Activated CD4-positive, alpha-beta memory T cell treated with anti-CD3 and anti-CD28 coated beads for 36 hours (primary cell): ENCODE measurements at regions of chr4 and their contacts with region 1.

Region 1: GRCh38 chr4:56655209-56655626 is 25.9 kb downstream of the HOPX start:
- DNase-seq: peak; percentile 31
- H3K4me3 Mint-ChIP-seq: peak overlapping the region; percentile 87
- H3K27ac Mint-ChIP-seq: peak overlapping the region; percentile 87
- H3K4me1 Mint-ChIP-seq: peaks cover 60% of the 10 kb centered on the region
- H3K27me3 Mint-ChIP-seq: peaks cover 38% of the 10 kb centered on the region

Region 2: GRCh38 chr4:56544573-56545131 is 110.6 kb before region 1 on chr4:
- CTCF ChIA-PET with region 1: interaction called, 6 read pairs
- POLR2A ChIA-PET with region 1: no interaction called
- intact Hi-C with region 1: loop called (anchors 10 kb)
- DNase-seq: peak; percentile 90
- H3K4me3 Mint-ChIP-seq: peak overlapping the region; percentile 42
- H3K27ac Mint-ChIP-seq: no peak overlapping the region
- H3K4me1 Mint-ChIP-seq: peaks cover 13% of the 10 kb centered on the region
- H3K27me3 Mint-ChIP-seq: peaks cover 8% of the 10 kb centered on the region

Region 3: DNA sequence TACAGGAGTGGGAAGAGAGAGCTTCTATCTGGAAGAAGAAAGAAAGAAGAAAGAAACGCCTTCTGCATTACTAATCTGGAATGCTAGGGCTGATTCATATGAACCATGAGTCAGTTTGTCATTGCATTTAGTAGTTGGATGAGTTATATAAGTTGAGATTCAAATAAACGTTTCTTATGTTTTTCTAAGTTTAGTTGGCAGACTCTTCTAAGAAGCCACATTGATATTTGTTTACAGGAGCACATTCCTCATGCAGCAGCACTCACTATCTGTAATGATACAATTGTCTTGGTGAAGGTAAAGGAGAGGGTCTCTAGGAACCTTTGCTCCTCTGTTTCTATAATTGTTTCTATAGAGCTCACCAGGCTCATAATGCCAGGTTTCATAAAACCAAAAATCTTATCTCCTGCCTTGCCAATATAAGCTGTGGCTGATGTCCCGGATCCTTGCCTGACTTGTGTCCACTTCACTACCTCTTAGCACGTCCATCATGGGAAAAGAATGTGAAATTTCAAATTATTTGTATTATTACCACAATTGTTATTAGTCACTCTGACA is 13.6 kb before region 1 on chr4:
- CTCF ChIA-PET with region 1: interaction called, 19 read pairs
- POLR2A ChIA-PET with region 1: interaction called, 64 read pairs
- intact Hi-C with region 1: loop called (anchors 1 kb)
- DNase-seq: no peak
- H3K4me3 Mint-ChIP-seq: no peak overlapping the region
- H3K27ac Mint-ChIP-seq: peak overlapping the region; percentile 80
- H3K4me1 Mint-ChIP-seq: peaks cover 32% of the 10 kb centered on the region
- H3K27me3 Mint-ChIP-seq: peaks cover 8% of the 10 kb centered on the region

Region 4: DNA sequence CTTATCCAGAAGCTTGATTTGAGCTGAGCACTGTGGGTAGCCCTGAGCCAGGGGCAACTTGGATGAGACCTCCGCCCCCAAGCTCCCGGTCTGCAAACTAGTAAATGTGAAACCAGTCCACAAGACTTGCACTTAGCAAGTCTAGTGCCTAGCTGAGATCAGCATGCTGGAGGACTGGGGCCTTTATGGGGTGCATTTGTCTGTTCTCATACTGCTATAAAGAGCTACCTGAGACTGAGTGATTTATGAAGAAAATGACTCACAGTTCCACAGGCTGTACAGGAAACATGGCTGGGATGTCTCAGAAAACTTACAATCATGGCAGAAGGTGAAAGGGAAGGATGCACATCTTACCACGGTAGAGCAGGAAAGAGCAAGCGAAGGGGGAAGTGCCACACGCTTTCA is 68.0 kb after region 1 on chr4:
- CTCF ChIA-PET with region 1: interaction called, 5 read pairs
- POLR2A ChIA-PET with region 1: interaction called, 8 read pairs
- intact Hi-C with region 1: loop called (anchors 1 kb)
- DNase-seq: peak; percentile 77
- H3K4me3 Mint-ChIP-seq: peak overlapping the region; percentile 5
- H3K27ac Mint-ChIP-seq: peak overlapping the region; percentile 80
- H3K4me1 Mint-ChIP-seq: peaks cover 23% of the 10 kb centered on the region
- H3K27me3 Mint-ChIP-seq: peaks cover 1% of the 10 kb centered on the region

Region 5: DNA sequence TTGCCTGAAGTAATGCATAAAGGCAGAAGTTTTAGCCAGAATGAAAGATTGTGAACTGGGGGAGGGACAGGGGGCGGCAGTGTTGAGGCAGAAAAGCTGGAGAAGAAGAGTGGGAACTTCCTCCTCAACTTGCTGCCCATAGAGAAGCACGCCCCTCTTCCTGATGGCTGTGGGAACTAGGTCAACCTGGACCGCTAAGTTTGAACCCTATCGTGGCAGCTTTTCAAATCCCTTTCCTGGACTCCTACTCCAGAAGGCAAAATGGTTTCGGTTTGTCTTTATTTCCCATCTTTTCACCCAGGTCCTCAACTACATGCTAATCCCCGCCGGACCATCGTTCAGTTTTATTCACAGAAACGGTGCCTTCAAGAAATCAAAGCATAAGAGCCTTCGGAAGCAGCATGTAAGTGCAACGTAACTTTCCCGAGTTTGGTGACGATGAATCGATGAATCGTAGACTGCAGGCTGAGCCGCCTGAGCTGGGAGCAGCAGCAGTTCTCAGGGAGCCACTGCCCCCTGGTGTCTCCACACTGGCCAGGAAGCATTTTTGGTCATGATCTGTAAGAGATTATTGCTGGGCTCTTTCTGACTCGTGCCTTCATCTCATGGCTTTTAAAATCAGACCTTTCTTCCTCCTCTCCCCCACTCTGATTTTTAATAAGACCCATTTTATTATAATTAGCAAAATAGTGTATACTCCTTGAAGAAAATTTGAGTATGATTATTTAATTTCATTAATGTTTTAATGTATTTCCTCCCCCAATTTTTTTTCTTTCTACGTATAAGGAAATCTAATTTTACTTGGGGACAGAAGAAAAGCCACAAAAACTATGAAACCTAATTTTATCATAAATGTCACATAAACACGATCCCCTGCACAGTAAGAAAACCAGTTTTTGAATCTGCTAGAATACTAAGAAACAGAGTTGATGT is 144.9 kb after region 1 on chr4:
- CTCF ChIA-PET with region 1: interaction called, 11 read pairs
- POLR2A ChIA-PET with region 1: no interaction called
- intact Hi-C with region 1: loop called (anchors 2 kb)
- DNase-seq: peak; percentile 92
- H3K4me3 Mint-ChIP-seq: peak overlapping the region; percentile 79
- H3K27ac Mint-ChIP-seq: no peak overlapping the region
- H3K4me1 Mint-ChIP-seq: peaks cover 13% of the 10 kb centered on the region
- H3K27me3 Mint-ChIP-seq: no peaks in the 10 kb centered on the region

Region 6: DNA sequence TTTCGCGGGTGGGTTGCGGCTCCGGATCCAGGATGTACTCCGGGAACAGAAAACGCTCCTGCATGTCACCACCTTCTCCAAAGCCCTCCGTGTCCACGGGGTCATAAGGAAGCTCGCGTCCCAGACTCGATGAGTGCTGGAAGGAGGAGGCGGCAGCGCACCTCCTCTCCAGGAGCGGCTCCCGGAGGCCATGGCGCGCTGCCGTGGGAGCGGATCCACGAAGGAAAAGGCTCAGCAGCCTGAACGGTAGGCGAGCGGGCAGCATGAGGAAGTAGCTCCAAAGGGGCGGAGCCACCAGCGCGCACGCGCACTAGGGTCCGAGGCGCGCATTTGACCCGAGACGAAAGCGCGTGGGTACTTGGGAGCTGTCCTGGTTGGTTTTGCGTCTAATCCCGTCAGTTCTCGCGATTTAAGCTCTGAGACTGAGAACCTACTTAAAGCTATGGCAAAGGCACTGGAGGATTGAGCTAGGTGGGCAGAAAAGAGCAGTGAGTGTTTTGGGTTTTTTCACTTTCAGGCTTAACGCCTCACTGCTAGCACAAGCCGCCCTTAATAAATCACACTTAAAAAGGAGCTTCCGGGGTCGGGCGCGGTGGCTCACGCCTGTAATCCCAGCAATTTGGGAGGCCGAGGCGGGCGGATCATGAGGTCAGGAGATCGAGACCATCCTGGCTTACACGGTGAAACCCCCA is 322.2 kb after region 1 on chr4 and contains the start of gene NOA1:
- CTCF ChIA-PET with region 1: no interaction called
- POLR2A ChIA-PET with region 1: interaction called, 5 read pairs
- intact Hi-C with region 1: loop called (anchors 5 kb)
- DNase-seq: peak; percentile 99
- H3K4me3 Mint-ChIP-seq: peak within 1 kb of the TSS; percentile 98
- H3K27ac Mint-ChIP-seq: peak within 1 kb of the TSS; percentile 99
- H3K4me1 Mint-ChIP-seq: peaks cover 52% of the 10 kb centered on the region
- H3K27me3 Mint-ChIP-seq: no peaks in the 10 kb centered on the region
- total RNA-seq, gene NOA1: 25.0 to 26.6 TPM